ENCODE measurements at regions of chr12 and their contacts with region 1.

Region 1: GRCh38 chr12:13223179-13223859 is 26.8 kb downstream of the EMP1 start:
- DNase-seq: peak; percentile 88
- H3K4me3 ChIP-seq: peak overlapping the region; percentile 20; the same call in 1 of the 2 replicates
- H3K27ac ChIP-seq: peak overlapping the region; percentile 88
- H3K4me1 ChIP-seq: peaks cover 68% of the 10 kb centered on the region
- H3K27me3 ChIP-seq: no peaks in the 10 kb centered on the region

Region 2: GRCh38 chr12:12916135-12916944 is 307.0 kb before region 1 on chr12:
- in situ Hi-C with region 1: loop called (anchors 10 kb)
- DNase-seq: peak; percentile 83
- H3K4me3 ChIP-seq: peak overlapping the region; percentile 30; the same call in 1 of the 2 replicates
- H3K27ac ChIP-seq: 0 out of 2 replicates have a peak overlapping the region, but pooled peaks have one; percentile 25
- H3K4me1 ChIP-seq: peaks cover 8% of the 10 kb centered on the region
- H3K27me3 ChIP-seq: no peaks in the 10 kb centered on the region

Measured in GM23248 (cell line).